ENCODE measurements at regions of chr2 and their contacts with region 1.

Region 1: DNA sequence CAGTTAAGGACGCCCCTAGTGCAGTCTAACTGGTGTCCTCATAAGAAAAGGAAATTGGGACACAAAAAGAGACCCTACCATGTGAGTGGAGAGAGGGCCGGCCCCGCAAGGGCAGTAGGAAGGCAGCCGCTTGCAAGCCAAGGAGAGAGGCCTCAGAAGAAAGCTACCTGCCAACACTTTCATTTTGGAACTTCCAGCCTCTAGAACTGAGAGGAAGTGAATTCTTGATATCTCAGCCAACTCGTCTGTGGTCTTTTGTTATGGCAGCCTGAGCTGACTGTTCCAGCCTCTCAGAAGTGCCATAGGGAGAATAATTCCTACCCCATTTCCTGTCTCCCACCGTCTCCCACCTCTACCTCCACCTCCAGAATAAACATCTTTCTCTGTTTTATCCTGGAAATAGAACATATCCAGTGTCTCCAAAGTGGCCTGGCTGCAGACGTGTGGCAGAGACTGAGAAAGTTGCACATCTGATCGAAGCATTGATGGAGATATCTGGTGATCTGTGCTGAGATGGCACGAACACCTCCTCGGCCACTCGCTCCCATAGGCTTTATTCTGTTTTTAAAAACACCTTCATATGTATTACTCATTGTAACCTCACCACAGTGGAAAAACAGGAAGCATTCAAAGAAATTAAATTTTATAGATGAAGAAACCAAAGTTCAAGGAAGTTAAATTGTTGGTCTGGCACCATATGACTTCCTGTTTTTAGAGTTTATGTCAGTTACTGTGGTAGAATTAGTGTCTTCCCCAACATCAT is 39.5 kb upstream of the MARCO start:
- DNase-seq: peak in 4 of 14 experiments; percentile 8 to 36 (median 33)
- ATAC-seq: peak; percentile 52
- H3K4me3 ChIP-seq: no peak overlapping the region
- H3K4me3 Mint-ChIP-seq: peak overlapping the region; percentile 59
- H3K27ac ChIP-seq: peak overlapping the region in 1 of 2 donors; percentile 29
- H3K27ac Mint-ChIP-seq: peak overlapping the region; percentile 74
- H3K4me1 ChIP-seq: peaks cover 25% of the 10 kb centered on the region
- H3K4me1 Mint-ChIP-seq: peaks cover 32% of the 10 kb centered on the region
- H3K27me3 ChIP-seq: no peaks in the 10 kb centered on the region
- H3K27me3 Mint-ChIP-seq: no peaks in the 10 kb centered on the region
- CTCF ChIP-seq: no peak

Region 2: DNA sequence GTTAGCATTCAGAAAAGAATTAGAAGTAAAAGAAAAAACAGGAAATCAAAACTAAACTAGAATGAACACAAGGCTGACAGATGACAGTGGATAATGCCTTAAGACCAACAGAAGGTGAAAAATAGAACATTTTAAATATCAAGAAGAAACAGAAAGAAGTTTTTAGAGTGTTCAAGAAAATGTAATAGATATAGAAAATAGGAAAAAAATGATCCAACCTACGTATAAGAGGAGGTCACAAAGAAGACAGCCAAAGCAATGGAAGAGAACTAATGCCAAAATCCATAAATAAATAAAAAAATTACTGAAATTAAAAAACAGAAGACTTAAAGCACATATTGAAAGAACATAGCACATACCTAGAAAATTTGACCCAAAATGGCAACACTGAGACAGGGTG is 12.5 kb before region 1 on chr2:
- CTCF ChIA-PET with region 1: interaction called, 3 read pairs
- POLR2A ChIA-PET with region 1: interaction called, 10 read pairs
- intact Hi-C with region 1: loop called in 1 of 2 experiments (anchors 1 kb)
- DNase-seq: no peak
- ATAC-seq: no peak
- H3K4me3 ChIP-seq: no peak overlapping the region
- H3K4me3 Mint-ChIP-seq: no peak overlapping the region
- H3K27ac ChIP-seq: no peak overlapping the region
- H3K27ac Mint-ChIP-seq: no peak overlapping the region
- H3K4me1 ChIP-seq: no peaks in the 10 kb centered on the region
- H3K4me1 Mint-ChIP-seq: no peaks in the 10 kb centered on the region
- H3K27me3 ChIP-seq: no peaks in the 10 kb centered on the region
- H3K27me3 Mint-ChIP-seq: no peaks in the 10 kb centered on the region
- CTCF ChIP-seq: no peak

Region 3: DNA sequence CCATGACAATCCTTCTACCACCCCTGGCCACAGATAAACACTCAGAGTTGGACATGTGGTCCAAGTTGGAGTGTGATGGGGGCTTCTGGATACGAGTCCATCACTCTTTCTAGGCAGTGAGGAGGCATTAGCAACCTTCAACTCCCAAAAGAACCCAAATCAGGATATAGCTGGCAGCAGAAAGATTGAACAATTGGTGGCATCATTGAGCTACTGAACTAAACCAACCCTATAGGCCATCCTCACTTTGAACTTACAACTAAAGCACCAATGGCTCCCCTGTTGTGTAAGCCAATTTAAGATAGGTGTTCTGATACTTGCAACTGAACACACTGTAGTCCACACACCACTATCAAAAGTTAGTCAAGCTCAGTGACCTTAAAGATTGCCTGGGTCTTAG is 15.6 kb after region 1 on chr2:
- CTCF ChIA-PET with region 1: no interaction called
- POLR2A ChIA-PET with region 1: interaction called, 13 read pairs
- intact Hi-C with region 1: no loop called
- DNase-seq: no peak
- ATAC-seq: no peak
- H3K4me3 ChIP-seq: no peak overlapping the region
- H3K4me3 Mint-ChIP-seq: no peak overlapping the region
- H3K27ac ChIP-seq: no peak overlapping the region
- H3K27ac Mint-ChIP-seq: no peak overlapping the region
- H3K4me1 ChIP-seq: no peaks in the 10 kb centered on the region
- H3K4me1 Mint-ChIP-seq: no peaks in the 10 kb centered on the region
- H3K27me3 ChIP-seq: no peaks in the 10 kb centered on the region
- H3K27me3 Mint-ChIP-seq: peaks cover 10% of the 10 kb centered on the region
- CTCF ChIP-seq: no peak